Motor neuron (in vitro differentiated cells): ENCODE measurements at regions of chr5 and their contacts with region 1.

Region 1: DNA sequence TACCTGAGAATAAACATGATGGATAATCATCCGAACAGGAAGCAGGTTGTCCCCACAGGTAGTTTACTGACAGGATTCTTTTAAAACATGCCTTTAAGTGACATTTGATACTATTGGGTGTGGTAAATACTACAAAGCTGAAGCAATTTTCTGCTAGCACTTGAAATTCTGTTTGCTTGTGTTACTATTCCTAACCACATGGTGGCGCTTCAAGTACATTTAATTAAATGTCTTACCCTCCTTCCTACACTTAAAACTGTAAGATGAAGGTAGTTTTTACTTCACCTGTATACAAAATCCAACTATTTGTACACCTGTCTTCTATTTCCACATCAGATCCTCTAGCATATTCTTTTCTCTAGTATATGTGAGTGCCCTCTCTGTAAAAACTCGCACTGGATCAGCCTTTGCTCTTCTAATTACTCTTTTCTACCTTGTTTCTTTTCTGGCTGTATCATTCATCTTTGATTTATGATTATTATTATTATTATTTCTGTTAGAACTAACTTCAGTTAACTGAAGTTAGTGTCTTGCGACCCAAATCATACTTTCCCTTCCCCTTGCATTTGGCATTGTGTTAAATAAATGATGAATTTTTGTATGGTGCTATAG is 18.4 kb downstream of the SLC25A46 start:
- ATAC-seq: peak in 4 of 8 experiments; percentile 17 to 50 (median 48)
- H3K4me3 ChIP-seq: no peak overlapping the region
- H3K27ac ChIP-seq: no peak overlapping the region
- H3K4me1 ChIP-seq: no peaks in the 10 kb centered on the region

Region 2: GRCh38 chr5:110644357-110644756 is 112.9 kb before region 1 on chr5:
- in situ Hi-C with region 1: no loop called
- ATAC-seq: no peak
- H3K4me3 ChIP-seq: no peak overlapping the region
- H3K27ac ChIP-seq: no peak overlapping the region
- H3K4me1 ChIP-seq: no peaks in the 10 kb centered on the region

Region 3: GRCh38 chr5:111072949-111073682 is 315.9 kb after region 1 on chr5:
- in situ Hi-C with region 1: loop called in 1 of 9 experiments (anchors 25 kb)
- ATAC-seq: peak; percentile 14 to 74 (median 60)
- H3K4me3 ChIP-seq: peak overlapping the region; percentile 11 to 35 (median 27)
- H3K27ac ChIP-seq: no peak overlapping the region
- H3K4me1 ChIP-seq: no peaks in the 10 kb centered on the region

Region 4: GRCh38 chr5:111116550-111116949 is 359.3 kb after region 1 on chr5:
- in situ Hi-C with region 1: loop called in 1 of 9 experiments (anchors 25 kb)
- ATAC-seq: no peak
- H3K4me3 ChIP-seq: no peak overlapping the region
- H3K27ac ChIP-seq: no peak overlapping the region
- H3K4me1 ChIP-seq: peaks cover 0 to 11% of the 10 kb centered on the region in 2 donors

Region 5: GRCh38 chr5:111143910-111144309 is 386.7 kb after region 1 on chr5:
- in situ Hi-C with region 1: loop called in 1 of 9 experiments (anchors 25 kb)
- ATAC-seq: peak in 3 of 8 experiments; percentile 17 to 100 (median 98)
- H3K4me3 ChIP-seq: no peak overlapping the region
- H3K27ac ChIP-seq: no peak overlapping the region
- H3K4me1 ChIP-seq: no peaks in the 10 kb centered on the region

Region 6: GRCh38 chr5:112160652-112161391 is 1403.6 kb after region 1 on chr5:
- in situ Hi-C with region 1: loop called in 2 of 9 experiments (anchors 25 kb)
- ATAC-seq: peak; percentile 85 to 95 (median 94)
- H3K4me3 ChIP-seq: peak overlapping the region; percentile 76 to 96 (median 94)
- H3K27ac ChIP-seq: peak overlapping the region; percentile 84 to 85
- H3K4me1 ChIP-seq: peaks cover 0 to 10% of the 10 kb centered on the region in 2 donors